Activated CD4-positive, alpha-beta T cell treated with anti-CD3 and anti-CD28 coated beads for 36 hours (primary cell): ENCODE measurements at regions of chr14 and their contacts with region 1.

Region 1: DNA sequence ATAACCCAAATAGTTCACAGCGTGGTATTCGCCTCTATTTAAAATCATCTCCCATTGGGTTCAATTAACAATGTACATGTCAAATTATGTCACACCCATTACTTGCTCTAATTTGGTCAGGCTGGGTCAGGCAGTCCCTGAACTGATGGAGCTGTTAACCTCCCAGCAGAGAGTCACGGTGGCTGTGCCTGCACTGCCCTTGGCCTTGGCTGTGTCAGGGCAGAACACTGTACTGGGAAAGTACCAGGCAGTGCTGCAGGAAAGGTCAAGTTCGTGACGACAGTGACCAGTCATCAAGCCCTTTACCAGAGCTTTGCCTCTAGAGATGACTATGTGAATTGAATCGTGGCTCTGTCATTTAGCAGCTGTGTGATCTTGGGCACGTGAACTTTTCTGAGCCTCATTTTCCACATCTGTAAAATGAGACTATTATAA is 100.0 kb downstream of the ARF6 start:
- DNase-seq: peak; percentile 76
- ATAC-seq: peak; percentile 92
- H3K4me3 Mint-ChIP-seq: peak overlapping the region; percentile 46
- H3K27ac Mint-ChIP-seq: peak overlapping the region; percentile 83
- H3K4me1 Mint-ChIP-seq: peaks cover 41% of the 10 kb centered on the region
- H3K27me3 Mint-ChIP-seq: no peaks in the 10 kb centered on the region

Region 2: GRCh38 chr14:49849213-49849847 is 143.6 kb before region 1 on chr14:
- CTCF ChIA-PET with region 1: no interaction called
- POLR2A ChIA-PET with region 1: no interaction called
- intact Hi-C with region 1: no loop called
- DNase-seq: no peak
- ATAC-seq: no peak
- H3K4me3 Mint-ChIP-seq: no peak overlapping the region
- H3K27ac Mint-ChIP-seq: peak overlapping the region; percentile 27
- H3K4me1 Mint-ChIP-seq: peaks cover 39% of the 10 kb centered on the region
- H3K27me3 Mint-ChIP-seq: no peaks in the 10 kb centered on the region

Region 3: GRCh38 chr14:50103558-50103957 is 110.6 kb after region 1 on chr14:
- CTCF ChIA-PET with region 1: interaction called, 10 read pairs
- POLR2A ChIA-PET with region 1: no interaction called
- intact Hi-C with region 1: no loop called
- DNase-seq: no peak
- ATAC-seq: no peak
- H3K4me3 Mint-ChIP-seq: peak overlapping the region; percentile 64
- H3K27ac Mint-ChIP-seq: peak overlapping the region; percentile 83
- H3K4me1 Mint-ChIP-seq: peaks cover 48% of the 10 kb centered on the region
- H3K27me3 Mint-ChIP-seq: no peaks in the 10 kb centered on the region